Posterior vena cava (tissue), 2 donors: ENCODE measurements at regions of chr12 and their contacts with region 1.

Region 1: DNA sequence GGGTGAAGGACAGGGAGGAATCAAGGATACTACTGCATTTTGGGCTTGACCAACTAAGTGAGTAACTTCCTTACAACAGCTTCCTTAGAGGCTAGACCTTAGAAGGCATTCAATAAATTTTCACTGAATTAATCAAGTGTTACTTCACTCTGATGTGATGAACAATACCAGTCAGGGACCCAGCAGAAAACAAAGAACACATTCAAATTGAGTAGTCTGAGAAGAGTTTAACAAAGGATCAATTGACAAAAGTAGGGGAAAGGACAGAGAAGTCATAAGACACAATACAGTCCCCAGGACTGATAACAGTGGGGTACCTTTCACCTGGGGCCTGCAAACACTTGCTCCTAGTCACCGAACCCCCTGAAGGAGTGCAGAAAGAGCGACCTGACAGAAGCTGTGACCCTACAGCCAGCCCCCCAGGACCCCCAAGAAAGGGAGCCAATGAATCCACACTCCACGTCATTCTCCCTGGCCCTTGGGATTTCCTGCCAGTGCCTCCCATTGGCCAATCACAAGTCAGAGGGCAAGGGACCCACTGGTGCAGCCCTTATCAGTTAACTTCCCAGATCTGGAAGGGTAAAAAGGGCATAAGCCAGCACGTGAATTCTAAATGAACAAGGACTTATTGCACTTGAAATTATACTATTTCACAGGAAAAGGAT is 6.9 kb downstream of the ANAPC5 start:
- DNase-seq: no peak

Region 2: GRCh38 chr12:120528861-120529525 is 816.3 kb before region 1 on chr12 and contains the start of gene COQ5:
- intact Hi-C with region 1: no loop called
- DNase-seq: peak; percentile 98
- total RNA-seq, gene COQ5: 15.7 to 21.5 TPM

Region 3: GRCh38 chr12:121295746-121296617 is 49.3 kb before region 1 on chr12:
- intact Hi-C with region 1: loop called in 1 of 2 experiments (anchors 1 kb)
- DNase-seq: no peak

Region 4: DNA sequence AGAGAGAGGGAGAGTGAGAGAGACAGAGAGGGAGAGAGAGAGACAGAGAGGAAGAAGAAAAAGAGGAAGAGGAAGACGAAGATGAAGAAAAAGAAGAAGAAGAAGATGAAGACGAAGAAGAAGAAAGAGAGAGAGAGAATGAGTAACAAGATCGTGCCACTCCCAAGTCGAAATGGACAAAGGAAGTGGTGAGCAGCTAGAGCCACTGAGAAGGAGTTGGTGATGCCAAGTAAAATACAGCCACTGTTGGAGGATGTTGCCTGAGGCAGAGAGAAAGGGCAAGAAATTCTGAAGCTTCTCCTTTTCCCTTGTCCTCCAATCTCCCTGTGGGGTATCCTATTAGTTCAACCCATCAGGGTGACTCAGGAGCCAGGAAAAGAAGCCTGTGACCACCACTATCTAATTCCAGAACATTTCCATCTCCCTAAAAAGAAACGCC is 19.4 kb after region 1 on chr12:
- intact Hi-C with region 1: no loop called
- DNase-seq: no peak

Region 5: DNA sequence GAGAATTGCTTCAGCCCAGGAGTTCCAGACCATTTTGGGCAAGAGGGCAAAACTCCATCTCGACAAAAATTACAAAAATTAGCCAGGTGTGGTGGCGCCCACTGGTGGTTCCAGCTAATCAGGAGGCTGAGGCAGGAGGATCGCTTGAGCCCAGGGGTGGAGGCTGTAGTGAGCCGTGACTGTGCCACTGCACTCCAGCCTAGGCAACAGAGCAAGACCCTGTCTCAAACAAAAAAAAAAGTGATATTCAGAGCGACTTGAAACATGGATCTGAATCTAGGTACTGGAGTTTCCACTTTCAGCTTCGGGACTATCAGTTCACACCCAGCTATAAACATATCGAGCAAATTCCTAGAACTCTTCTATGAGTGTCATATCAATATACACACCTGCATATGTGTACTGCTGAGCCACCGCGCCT is 38.3 kb after region 1 on chr12:
- intact Hi-C with region 1: no loop called
- DNase-seq: no peak

Region 6: DNA sequence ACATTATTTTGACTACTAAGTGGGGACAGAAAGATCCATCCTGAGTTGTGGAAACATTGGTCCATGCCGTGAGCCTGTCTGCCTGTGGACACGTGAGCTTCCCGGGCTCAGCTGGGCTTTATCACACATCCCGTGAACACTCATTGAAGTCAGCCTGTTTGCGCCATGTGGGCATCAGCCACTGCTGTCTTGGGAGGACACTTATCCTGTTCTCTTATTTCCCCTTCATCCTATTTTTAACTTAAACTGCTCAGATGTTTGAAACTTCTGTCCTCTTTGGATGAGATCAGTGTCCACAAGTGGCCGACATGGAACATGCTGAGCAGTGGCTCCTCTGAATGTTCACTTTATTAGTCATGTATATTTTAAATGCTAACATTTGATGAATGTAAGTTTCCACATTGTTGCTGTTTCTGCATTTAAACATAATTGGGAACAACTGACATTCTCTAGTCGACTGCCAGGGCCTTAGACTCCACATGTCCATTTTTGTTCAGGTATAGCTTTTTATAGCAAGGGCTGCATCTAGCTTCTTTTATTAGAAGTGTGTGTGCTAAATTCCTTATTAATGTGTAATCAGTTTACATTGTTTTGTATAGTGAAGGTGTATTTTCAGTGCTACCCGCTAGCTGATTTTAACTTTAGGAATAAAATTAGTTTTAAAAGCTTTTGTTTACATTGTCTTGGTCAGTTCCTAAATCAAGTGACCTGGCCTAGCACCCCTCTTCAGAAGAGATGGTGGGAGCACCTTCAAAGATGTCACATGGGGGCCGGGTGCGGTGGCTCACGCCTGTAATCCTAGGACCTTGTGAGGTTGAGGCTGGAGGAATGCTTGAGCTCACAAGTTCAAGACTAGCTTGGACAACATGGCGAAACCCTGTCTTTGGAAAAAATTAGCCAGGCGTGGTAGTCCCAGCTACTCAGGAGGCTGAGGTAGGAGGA is 78.7 kb after region 1 on chr12:
- intact Hi-C with region 1: no loop called
- DNase-seq: no peak